AG04450 (cell line): ENCODE measurements at regions of chr1 and their contacts with region 1.

Region 1: GRCh38 chr1:38859561-38860453 is at the start of gene RRAGC:
- DNase-seq: peak; percentile 95
- H3K4me3 ChIP-seq: peak within 1 kb of the TSS; percentile 100
- H3K27ac ChIP-seq: peak within 1 kb of the TSS; percentile 43
- H3K27me3 ChIP-seq: no peaks in the 10 kb centered on the region
- CTCF ChIP-seq: no peak
- polyA plus RNA-seq, gene RRAGC: 23.3 and 24.9 TPM in 2 replicates

Region 2: DNA sequence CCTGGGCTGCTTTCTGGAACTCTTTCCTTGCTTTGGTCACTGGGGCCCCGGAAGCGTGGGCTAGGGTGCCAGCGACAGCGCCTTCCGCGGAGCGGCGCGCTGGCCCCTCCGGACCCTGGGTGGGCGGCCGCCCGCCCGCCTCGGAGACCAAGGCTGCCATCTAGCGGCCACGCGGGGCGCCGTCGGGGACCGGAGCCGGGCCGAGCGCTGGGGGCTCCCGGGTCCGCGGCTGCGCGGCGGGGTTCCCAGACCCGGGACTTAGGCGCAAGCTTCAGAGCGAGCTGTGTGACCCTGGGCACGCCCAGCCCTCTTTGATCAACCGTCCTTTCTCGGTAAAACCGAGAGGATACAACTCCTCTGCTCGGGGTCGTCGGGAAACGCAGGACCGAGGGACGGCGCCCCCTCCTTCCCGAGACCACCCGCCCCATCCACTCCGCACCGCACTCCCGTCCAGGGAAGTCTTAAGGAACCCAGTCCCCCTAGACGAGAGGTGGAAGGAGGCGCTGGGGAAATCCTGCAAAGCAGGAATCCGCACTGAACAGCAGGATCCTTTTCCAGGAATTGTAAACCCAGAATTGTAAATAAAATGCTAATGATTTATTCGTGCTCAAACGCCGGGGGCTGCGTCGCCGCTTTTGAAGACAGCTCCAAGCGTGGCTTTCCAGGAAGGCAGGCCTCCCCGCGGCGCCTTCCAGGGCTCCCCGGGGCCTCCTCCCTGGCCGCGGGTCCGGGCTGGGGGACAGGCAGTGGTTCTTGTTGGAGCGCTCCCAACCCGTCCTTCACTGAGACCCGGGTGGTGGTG is 41.4 kb before region 1 on chr1:
- CTCF ChIA-PET with region 1: interaction called, 15 read pairs
- POLR2A ChIA-PET with region 1: no interaction called
- DNase-seq: no peak
- H3K4me3 ChIP-seq: 0 out of 2 replicates have a peak overlapping the region, but pooled peaks have one; percentile 4
- H3K27ac ChIP-seq: no peak overlapping the region
- H3K27me3 ChIP-seq: peaks cover 72% of the 10 kb centered on the region
- CTCF ChIP-seq: peak; percentile 46; the same call in 1 of the 2 replicates

Region 3: GRCh38 chr1:39063775-39064174 is 204.0 kb after region 1 on chr1:
- CTCF ChIA-PET with region 1: no interaction called
- POLR2A ChIA-PET with region 1: no interaction called
- DNase-seq: no peak
- H3K4me3 ChIP-seq: no peak overlapping the region
- H3K27ac ChIP-seq: no peak overlapping the region
- H3K27me3 ChIP-seq: no peaks in the 10 kb centered on the region
- CTCF ChIP-seq: no peak

Region 4: GRCh38 chr1:39127513-39127912 is 267.7 kb after region 1 on chr1:
- CTCF ChIA-PET with region 1: no interaction called
- POLR2A ChIA-PET with region 1: no interaction called
- DNase-seq: no peak
- H3K4me3 ChIP-seq: no peak overlapping the region
- H3K27ac ChIP-seq: no peak overlapping the region
- H3K27me3 ChIP-seq: no peaks in the 10 kb centered on the region
- CTCF ChIP-seq: no peak

Region 5: GRCh38 chr1:39370602-39371001 is 510.8 kb after region 1 on chr1:
- CTCF ChIA-PET with region 1: no interaction called
- POLR2A ChIA-PET with region 1: no interaction called
- DNase-seq: no peak
- H3K4me3 ChIP-seq: no peak overlapping the region
- H3K27ac ChIP-seq: no peak overlapping the region
- H3K27me3 ChIP-seq: no peaks in the 10 kb centered on the region
- CTCF ChIP-seq: no peak